T-cell (primary cell): ENCODE measurements at regions of chr1 and their contacts with region 1.

Region 1: DNA sequence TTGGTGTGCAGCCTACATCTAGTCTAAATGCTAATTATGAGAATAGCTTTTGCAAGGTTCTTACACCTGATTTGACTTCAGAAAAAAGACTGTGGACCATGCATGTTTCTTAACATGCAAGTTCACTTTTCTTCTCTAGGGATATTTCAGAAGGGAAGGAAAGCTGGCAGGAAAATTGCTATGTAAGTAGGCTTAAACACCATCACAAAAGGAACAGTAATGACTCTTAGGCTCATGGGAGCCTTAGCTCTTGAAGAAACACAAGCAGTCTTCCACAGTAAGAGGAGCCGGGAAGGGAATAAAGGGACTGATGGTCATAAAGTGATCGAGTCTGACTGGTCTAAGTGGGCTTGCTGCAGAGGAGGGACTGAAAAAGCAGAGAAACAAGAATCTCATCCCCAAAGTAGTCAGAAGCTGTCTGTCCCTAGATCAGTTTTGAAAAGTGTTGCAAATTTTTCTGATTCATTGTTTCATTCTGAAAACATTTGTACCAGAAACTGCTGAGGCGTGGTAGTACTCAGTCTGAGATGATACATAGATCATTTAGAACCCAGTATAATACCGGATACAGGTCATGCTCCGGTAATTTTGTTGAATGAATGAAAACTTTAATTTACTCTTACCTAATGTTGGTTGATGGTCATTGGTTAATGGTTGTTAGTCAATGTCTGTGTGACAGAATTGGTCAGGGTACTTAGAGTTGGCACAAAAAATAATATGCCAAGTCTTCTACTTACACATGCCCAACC is 40.9 kb downstream of the SMYD2 start:
- DNase-seq: no peak
- ATAC-seq: no peak
- H3K4me3 ChIP-seq: no peak overlapping the region
- H3K4me3 Mint-ChIP-seq: no peak overlapping the region
- H3K27ac ChIP-seq: no peak overlapping the region
- H3K27ac Mint-ChIP-seq: peak overlapping the region in 1 of 2 donors; percentile 17
- H3K4me1 ChIP-seq: no peaks in the 10 kb centered on the region
- H3K4me1 Mint-ChIP-seq: no peaks in the 10 kb centered on the region
- H3K27me3 ChIP-seq: no peaks in the 10 kb centered on the region
- H3K27me3 Mint-ChIP-seq: no peaks in the 10 kb centered on the region

Region 2: GRCh38 chr1:214124915-214125314 is 197.0 kb before region 1 on chr1:
- CTCF ChIA-PET with region 1: no interaction called
- POLR2A ChIA-PET with region 1: interaction called in 1 of 2 experiments, 10 read pairs
- DNase-seq: no peak
- ATAC-seq: no peak
- H3K4me3 ChIP-seq: no peak overlapping the region
- H3K4me3 Mint-ChIP-seq: no peak overlapping the region
- H3K27ac ChIP-seq: no peak overlapping the region
- H3K27ac Mint-ChIP-seq: no peak overlapping the region
- H3K4me1 ChIP-seq: no peaks in the 10 kb centered on the region
- H3K4me1 Mint-ChIP-seq: peaks cover 0 to 12% (median 10%) of the 10 kb centered on the region in 3 donors
- H3K27me3 ChIP-seq: no peaks in the 10 kb centered on the region
- H3K27me3 Mint-ChIP-seq: peaks cover 0 to 14% of the 10 kb centered on the region in 2 donors

Region 3: DNA sequence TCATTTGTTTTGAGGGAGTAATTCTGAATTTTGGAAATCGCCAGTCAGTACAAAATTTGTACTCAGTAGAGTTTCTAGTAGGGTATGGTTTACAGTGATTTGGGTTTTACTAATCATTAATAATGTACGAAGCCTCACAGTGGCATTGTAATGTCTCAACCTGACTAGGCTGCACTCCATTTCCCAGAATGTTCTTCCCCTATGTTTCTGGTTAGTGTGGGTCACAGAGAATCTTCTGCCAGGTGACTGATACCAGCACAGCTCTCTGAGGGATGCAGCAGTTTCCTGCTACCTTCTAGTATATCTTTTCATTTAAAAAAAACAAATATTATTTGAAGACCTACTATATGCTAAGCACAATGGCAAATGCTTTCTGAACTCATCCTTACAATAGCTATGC is 116.7 kb after region 1 on chr1:
- CTCF ChIA-PET with region 1: no interaction called
- POLR2A ChIA-PET with region 1: no interaction called
- DNase-seq: no peak
- ATAC-seq: no peak
- H3K4me3 ChIP-seq: no peak overlapping the region
- H3K4me3 Mint-ChIP-seq: no peak overlapping the region
- H3K27ac ChIP-seq: no peak overlapping the region
- H3K27ac Mint-ChIP-seq: no peak overlapping the region
- H3K4me1 ChIP-seq: peaks cover 0 to 21% of the 10 kb centered on the region in 2 experiments
- H3K4me1 Mint-ChIP-seq: peaks cover 31 to 39% (median 31%) of the 10 kb centered on the region in 3 donors
- H3K27me3 ChIP-seq: no peaks in the 10 kb centered on the region
- H3K27me3 Mint-ChIP-seq: peaks cover 3 to 6% of the 10 kb centered on the region in 2 donors

Region 4: GRCh38 chr1:214777364-214777763 is 455.5 kb after region 1 on chr1:
- CTCF ChIA-PET with region 1: no interaction called
- POLR2A ChIA-PET with region 1: no interaction called
- DNase-seq: no peak
- ATAC-seq: no peak
- H3K4me3 ChIP-seq: no peak overlapping the region
- H3K4me3 Mint-ChIP-seq: no peak overlapping the region
- H3K27ac ChIP-seq: no peak overlapping the region
- H3K27ac Mint-ChIP-seq: no peak overlapping the region
- H3K4me1 ChIP-seq: no peaks in the 10 kb centered on the region
- H3K4me1 Mint-ChIP-seq: no peaks in the 10 kb centered on the region
- H3K27me3 ChIP-seq: no peaks in the 10 kb centered on the region
- H3K27me3 Mint-ChIP-seq: no peaks in the 10 kb centered on the region

Region 5: GRCh38 chr1:214895011-214895600 is 573.2 kb after region 1 on chr1:
- CTCF ChIA-PET with region 1: no interaction called
- POLR2A ChIA-PET with region 1: no interaction called
- DNase-seq: no peak
- ATAC-seq: no peak
- H3K4me3 ChIP-seq: no peak overlapping the region
- H3K4me3 Mint-ChIP-seq: no peak overlapping the region
- H3K27ac ChIP-seq: no peak overlapping the region
- H3K27ac Mint-ChIP-seq: no peak overlapping the region
- H3K4me1 ChIP-seq: no peaks in the 10 kb centered on the region
- H3K4me1 Mint-ChIP-seq: no peaks in the 10 kb centered on the region
- H3K27me3 ChIP-seq: no peaks in the 10 kb centered on the region
- H3K27me3 Mint-ChIP-seq: no peaks in the 10 kb centered on the region